HepG2 (cell line): ENCODE measurements at regions of chr1 and their contacts with region 1.

Region 1: GRCh38 chr1:182962554-182963115 is 9.7 kb upstream of the SHCBP1L start:
- DNase-seq: peak; percentile 73
- ATAC-seq: peak; percentile 99
- H3K4me3 ChIP-seq: peak overlapping the region; percentile 6 to 30 (median 9); a peak in 3 of 6 replicates
- H3K27ac ChIP-seq: no peak overlapping the region
- H3K4me1 ChIP-seq: peaks cover 5% of the 10 kb centered on the region; the same call in 1 of the 2 replicates
- H3K27me3 ChIP-seq: no peaks in the 10 kb centered on the region
- CTCF ChIP-seq: peak; percentile 89
- EP300 ChIP-seq: no peak
- POLR2A ChIP-seq: no peak
- RAD21 ChIP-seq: peak; percentile 90

Region 2: DNA sequence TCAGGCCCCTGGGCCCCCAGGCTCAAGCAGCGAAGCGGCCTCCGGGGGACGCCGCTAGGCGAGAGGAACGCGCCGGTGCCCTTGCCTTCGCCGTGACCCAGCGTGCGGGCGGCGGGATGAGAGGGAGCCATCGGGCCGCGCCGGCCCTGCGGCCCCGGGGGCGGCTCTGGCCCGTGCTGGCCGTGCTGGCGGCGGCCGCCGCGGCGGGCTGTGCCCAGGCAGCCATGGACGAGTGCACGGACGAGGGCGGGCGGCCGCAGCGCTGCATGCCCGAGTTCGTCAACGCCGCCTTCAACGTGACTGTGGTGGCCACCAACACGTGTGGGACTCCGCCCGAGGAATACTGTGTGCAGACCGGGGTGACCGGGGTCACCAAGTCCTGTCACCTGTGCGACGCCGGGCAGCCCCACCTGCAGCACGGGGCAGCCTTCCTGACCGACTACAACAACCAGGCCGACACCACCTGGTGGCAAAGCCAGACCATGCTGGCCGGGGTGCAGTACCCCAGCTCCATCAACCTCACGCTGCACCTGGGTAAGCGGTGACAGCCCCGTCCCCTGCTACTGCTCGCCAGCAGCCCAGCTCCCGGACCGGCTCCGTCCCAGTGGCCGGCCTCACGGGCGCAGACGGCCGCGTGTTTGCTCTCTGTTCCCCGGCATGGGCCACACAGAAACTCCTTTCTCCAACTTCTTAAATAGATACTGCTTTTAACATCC is 61.1 kb after region 1 on chr1:
- CTCF ChIA-PET with region 1: interaction called, 10 read pairs
- POLR2A ChIA-PET with region 1: no interaction called
- in situ Hi-C with region 1: no loop called
- intact Hi-C with region 1: loop called (anchors 1 kb)
- DNase-seq: peak; percentile 77
- ATAC-seq: peak; percentile 90
- H3K4me3 ChIP-seq: peak overlapping the region; percentile 81 to 95 (median 90)
- H3K27ac ChIP-seq: peak overlapping the region; percentile 86
- H3K4me1 ChIP-seq: peaks cover 59% of the 10 kb centered on the region
- H3K27me3 ChIP-seq: no peaks in the 10 kb centered on the region
- CTCF ChIP-seq: peak; percentile 83
- EP300 ChIP-seq: no peak
- POLR2A ChIP-seq: peak in 1 of 2 experiments; percentile 38; a peak in 1 of 4 replicates
- RAD21 ChIP-seq: peak; percentile 65

Region 3: DNA sequence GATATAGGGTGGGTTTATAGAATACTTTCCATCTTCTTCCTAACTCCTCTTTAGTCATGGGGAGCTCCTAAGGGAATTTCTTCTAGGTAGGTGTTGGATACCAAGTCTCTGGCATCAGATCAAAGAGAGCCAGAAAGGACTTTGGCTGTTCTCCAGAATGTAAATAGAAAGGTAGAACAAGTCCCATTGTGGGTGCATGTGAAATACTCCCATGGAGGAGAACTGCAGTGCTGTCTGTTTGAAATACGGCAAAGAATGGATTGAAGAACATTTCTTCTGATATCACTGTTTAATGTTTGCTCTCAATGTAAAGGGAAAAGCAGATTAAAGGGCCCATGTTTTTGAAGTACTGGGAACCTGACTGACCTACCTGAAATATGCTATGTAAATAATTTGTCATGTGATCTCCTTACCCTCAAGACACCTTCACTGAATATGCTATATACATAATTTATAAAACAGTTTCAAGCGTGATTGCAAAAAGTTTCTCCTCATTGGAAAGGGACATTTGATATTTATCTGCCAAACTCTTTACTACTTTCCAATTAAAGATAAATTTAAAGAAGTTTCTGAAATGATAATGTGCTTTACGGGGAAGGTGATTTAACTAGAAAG is 126.5 kb after region 1 on chr1:
- CTCF ChIA-PET with region 1: no interaction called
- POLR2A ChIA-PET with region 1: no interaction called
- in situ Hi-C with region 1: no loop called
- intact Hi-C with region 1: loop called (anchors 5 kb)
- DNase-seq: peak; percentile 98
- ATAC-seq: peak; percentile 95
- H3K4me3 ChIP-seq: no peak overlapping the region; a peak in 1 of 6 replicates
- H3K27ac ChIP-seq: peak overlapping the region; percentile 68
- H3K4me1 ChIP-seq: peaks cover 89% of the 10 kb centered on the region
- H3K27me3 ChIP-seq: no peaks in the 10 kb centered on the region
- CTCF ChIP-seq: no peak
- EP300 ChIP-seq: peak in 1 of 2 experiments; percentile 90; a peak in 2 of 4 replicates
- POLR2A ChIP-seq: no peak
- RAD21 ChIP-seq: no peak

Region 4: GRCh38 chr1:183110326-183110865 is 147.8 kb after region 1 on chr1:
- CTCF ChIA-PET with region 1: no interaction called
- POLR2A ChIA-PET with region 1: no interaction called
- in situ Hi-C with region 1: loop called (anchors 10 kb)
- intact Hi-C with region 1: no loop called
- DNase-seq: no peak
- ATAC-seq: no peak
- H3K4me3 ChIP-seq: no peak overlapping the region
- H3K27ac ChIP-seq: no peak overlapping the region
- H3K4me1 ChIP-seq: peaks cover 13% of the 10 kb centered on the region
- H3K27me3 ChIP-seq: no peaks in the 10 kb centered on the region
- CTCF ChIP-seq: no peak
- EP300 ChIP-seq: no peak
- POLR2A ChIP-seq: no peak
- RAD21 ChIP-seq: no peak

Region 5: DNA sequence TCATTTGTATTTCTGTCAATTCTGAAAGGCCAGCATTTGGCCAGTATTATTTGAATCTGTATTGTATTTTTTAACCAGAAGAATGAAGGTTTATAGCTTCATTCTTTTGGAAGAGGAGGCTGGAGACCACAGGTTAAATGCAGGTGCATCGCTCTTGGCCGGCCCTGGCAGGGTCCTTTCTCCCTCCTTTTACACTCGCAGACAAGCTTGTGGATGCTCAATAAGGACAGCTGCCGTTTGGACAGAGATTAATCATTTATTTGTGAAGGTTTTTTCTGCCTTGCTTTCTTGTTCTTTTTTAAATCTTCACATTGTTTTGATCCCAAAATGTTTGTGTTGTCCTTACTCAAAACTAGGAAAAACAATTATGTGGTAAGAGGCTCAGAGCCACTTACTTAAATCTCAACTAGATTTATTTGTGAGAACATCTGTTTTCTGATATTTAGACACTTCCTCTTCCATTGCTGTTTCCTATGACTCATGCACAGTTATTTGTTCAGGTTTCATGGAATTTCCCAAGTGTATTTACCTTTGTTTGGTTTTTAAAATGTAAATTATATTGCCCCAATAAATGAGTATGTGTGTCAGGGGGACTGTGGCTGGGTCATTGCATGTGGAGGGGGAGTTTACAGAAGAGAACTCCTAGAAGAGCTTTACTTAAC is 176.8 kb after region 1 on chr1:
- CTCF ChIA-PET with region 1: no interaction called
- POLR2A ChIA-PET with region 1: no interaction called
- in situ Hi-C with region 1: no loop called
- intact Hi-C with region 1: loop called (anchors 5 kb)
- DNase-seq: peak; percentile 74
- ATAC-seq: peak; percentile 81
- H3K4me3 ChIP-seq: no peak overlapping the region
- H3K27ac ChIP-seq: peak overlapping the region; percentile 35
- H3K4me1 ChIP-seq: peaks cover 23% of the 10 kb centered on the region
- H3K27me3 ChIP-seq: no peaks in the 10 kb centered on the region
- CTCF ChIP-seq: no peak
- EP300 ChIP-seq: peak in 1 of 2 experiments; percentile 67; a peak in 2 of 4 replicates
- POLR2A ChIP-seq: no peak
- RAD21 ChIP-seq: no peak

Region 6: GRCh38 chr1:183227963-183228649 is 265.5 kb after region 1 on chr1:
- CTCF ChIA-PET with region 1: interaction called, 21 read pairs
- POLR2A ChIA-PET with region 1: interaction called, 5 read pairs
- in situ Hi-C with region 1: loop called (anchors 5 kb)
- intact Hi-C with region 1: loop called (anchors 1 kb)
- DNase-seq: peak; percentile 30
- ATAC-seq: peak; percentile 95
- H3K4me3 ChIP-seq: no peak overlapping the region
- H3K27ac ChIP-seq: no peak overlapping the region
- H3K4me1 ChIP-seq: peaks cover 34% of the 10 kb centered on the region
- H3K27me3 ChIP-seq: 0 out of 5 replicates have a peak, but pooled peaks cover 0 to 8% of the 10 kb centered on the region in 2 experiments
- CTCF ChIP-seq: peak; percentile 75
- EP300 ChIP-seq: no peak
- POLR2A ChIP-seq: no peak
- RAD21 ChIP-seq: no peak